PC-9 (cell line): ENCODE measurements at regions of chr7 and their contacts with region 1.

Region 1: GRCh38 chr7:106056513-106057203 is 55.5 kb downstream of the SYPL1 start:
- DNase-seq: peak; percentile 49 to 66
- H3K4me3 ChIP-seq: no peak overlapping the region
- H3K27ac ChIP-seq: no peak overlapping the region
- H3K4me1 ChIP-seq: peaks cover 42% of the 10 kb centered on the region
- H3K27me3 ChIP-seq: no peaks in the 10 kb centered on the region
- CTCF ChIP-seq: peak; percentile 85

Region 2: GRCh38 chr7:106071356-106071998 is 14.8 kb after region 1 on chr7:
- CTCF ChIA-PET with region 1: interaction called, 6 read pairs
- POLR2A ChIA-PET with region 1: interaction called, 9 read pairs
- intact Hi-C with region 1: loop called (anchors 1 kb)
- DNase-seq: peak; percentile 87 to 93
- H3K4me3 ChIP-seq: peak overlapping the region; percentile 24; the same call in 1 of the 2 replicates
- H3K27ac ChIP-seq: peak overlapping the region; percentile 95
- H3K4me1 ChIP-seq: peaks cover 61% of the 10 kb centered on the region
- H3K27me3 ChIP-seq: no peaks in the 10 kb centered on the region
- CTCF ChIP-seq: no peak

Region 3: GRCh38 chr7:106089647-106090046 is 33.0 kb after region 1 on chr7:
- CTCF ChIA-PET with region 1: no interaction called
- POLR2A ChIA-PET with region 1: no interaction called
- intact Hi-C with region 1: no loop called
- DNase-seq: no peak
- H3K4me3 ChIP-seq: no peak overlapping the region
- H3K27ac ChIP-seq: no peak overlapping the region
- H3K4me1 ChIP-seq: no peaks in the 10 kb centered on the region
- H3K27me3 ChIP-seq: no peaks in the 10 kb centered on the region
- CTCF ChIP-seq: no peak

Region 4: GRCh38 chr7:106112117-106112971 is 55.7 kb after region 1 on chr7 and contains the start of gene SYPL1:
- CTCF ChIA-PET with region 1: interaction called, 4 read pairs
- POLR2A ChIA-PET with region 1: no interaction called
- intact Hi-C with region 1: loop called (anchors 1 kb)
- DNase-seq: peak; percentile 80 to 97
- H3K4me3 ChIP-seq: peak within 1 kb of the TSS; percentile 88
- H3K27ac ChIP-seq: peak within 1 kb of the TSS; percentile 86
- H3K4me1 ChIP-seq: peaks cover 43% of the 10 kb centered on the region
- H3K27me3 ChIP-seq: no peaks in the 10 kb centered on the region
- CTCF ChIP-seq: no peak
- total RNA-seq, gene SYPL1: 83.9 and 102 TPM in 2 replicates

Region 5: GRCh38 chr7:106153891-106154449 is 97.3 kb after region 1 on chr7:
- CTCF ChIA-PET with region 1: interaction called, 17 read pairs
- POLR2A ChIA-PET with region 1: no interaction called
- intact Hi-C with region 1: loop called (anchors 1 kb)
- DNase-seq: peak; percentile 68 to 89
- H3K4me3 ChIP-seq: no peak overlapping the region
- H3K27ac ChIP-seq: no peak overlapping the region
- H3K4me1 ChIP-seq: peaks cover 12% of the 10 kb centered on the region
- H3K27me3 ChIP-seq: no peaks in the 10 kb centered on the region
- CTCF ChIP-seq: peak; percentile 94

Region 6: GRCh38 chr7:106187613-106188350 is 131.1 kb after region 1 on chr7:
- CTCF ChIA-PET with region 1: no interaction called
- POLR2A ChIA-PET with region 1: no interaction called
- intact Hi-C with region 1: no loop called
- DNase-seq: no peak
- H3K4me3 ChIP-seq: no peak overlapping the region
- H3K27ac ChIP-seq: no peak overlapping the region
- H3K4me1 ChIP-seq: no peaks in the 10 kb centered on the region
- H3K27me3 ChIP-seq: no peaks in the 10 kb centered on the region
- CTCF ChIP-seq: no peak

Region 7: GRCh38 chr7:107150375-107151073 is 1093.9 kb after region 1 on chr7:
- CTCF ChIA-PET with region 1: interaction called, 11 read pairs
- POLR2A ChIA-PET with region 1: no interaction called
- intact Hi-C with region 1: no loop called
- DNase-seq: peak; percentile 45 to 70
- H3K4me3 ChIP-seq: no peak overlapping the region
- H3K27ac ChIP-seq: no peak overlapping the region
- H3K4me1 ChIP-seq: peaks cover 12% of the 10 kb centered on the region; the same call in 1 of the 2 replicates
- H3K27me3 ChIP-seq: no peaks in the 10 kb centered on the region
- CTCF ChIP-seq: peak; percentile 87